Caco-2 (cell line): ENCODE measurements at regions of chr11 and their contacts with region 1.

Region 1: GRCh38 chr11:120688163-120688562 is 176.6 kb downstream of the GRIK4 start:
- DNase-seq: peak in 1 of 2 experiments; percentile 3
- H3K4me3 ChIP-seq: no peak overlapping the region
- H3K4me3 Mint-ChIP-seq: no peak overlapping the region
- H3K27ac Mint-ChIP-seq: no peak overlapping the region
- H3K4me1 ChIP-seq: no peaks in the 10 kb centered on the region
- H3K4me1 Mint-ChIP-seq: no peaks in the 10 kb centered on the region
- H3K27me3 ChIP-seq: no peaks in the 10 kb centered on the region
- H3K27me3 Mint-ChIP-seq: peaks cover 4% of the 10 kb centered on the region
- CTCF ChIP-seq: no peak

Region 2: DNA sequence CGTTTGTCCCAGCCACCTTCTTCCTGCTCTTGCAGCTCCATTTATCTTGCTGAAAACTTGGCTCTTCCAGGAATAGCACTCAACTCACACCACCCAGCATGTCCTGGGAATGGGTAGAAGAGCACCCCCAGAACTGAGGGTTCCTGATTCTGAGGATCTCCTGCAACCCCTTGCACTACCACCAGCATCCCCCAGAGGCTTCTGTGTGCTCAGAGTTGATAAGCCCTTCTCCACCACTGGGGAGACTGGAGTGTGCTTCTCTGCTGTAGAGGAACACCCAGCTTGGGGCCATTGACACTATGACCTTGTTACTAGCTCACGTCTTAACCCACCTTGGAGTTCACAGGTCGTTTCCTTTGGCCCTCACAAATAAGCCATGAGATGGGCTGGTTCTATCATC is 55.6 kb before region 1 on chr11:
- CTCF ChIA-PET with region 1: interaction called, 15 read pairs
- POLR2A ChIA-PET with region 1: no interaction called
- intact Hi-C with region 1: loop called (anchors 5 kb)
- DNase-seq: peak in 1 of 2 experiments; percentile 30
- H3K4me3 ChIP-seq: no peak overlapping the region
- H3K4me3 Mint-ChIP-seq: no peak overlapping the region
- H3K27ac Mint-ChIP-seq: no peak overlapping the region
- H3K4me1 ChIP-seq: peaks cover 9% of the 10 kb centered on the region; the same call in 1 of the 2 replicates
- H3K4me1 Mint-ChIP-seq: no peaks in the 10 kb centered on the region
- H3K27me3 ChIP-seq: no peaks in the 10 kb centered on the region
- H3K27me3 Mint-ChIP-seq: no peaks in the 10 kb centered on the region
- CTCF ChIP-seq: peak; percentile 24 to 59